ENCODE measurements at regions of chr11 and their contacts with region 1.

Region 1: GRCh38 chr11:124769801-124770639 is 7.9 kb upstream of the ESAM start:
- DNase-seq: no peak
- H3K4me3 ChIP-seq: no peak overlapping the region
- H3K27ac ChIP-seq: no peak overlapping the region
- H3K4me1 ChIP-seq: no peaks in the 10 kb centered on the region
- H3K27me3 ChIP-seq: no peaks in the 10 kb centered on the region
- CTCF ChIP-seq: no peak
- POLR2A ChIP-seq: no peak

Region 2: GRCh38 chr11:126231725-126232459 is 1461.9 kb after region 1 on chr11:
- intact Hi-C with region 1: loop called (anchors 5 kb)
- DNase-seq: no peak
- H3K4me3 ChIP-seq: no peak overlapping the region
- H3K27ac ChIP-seq: no peak overlapping the region
- H3K4me1 ChIP-seq: no peaks in the 10 kb centered on the region
- H3K27me3 ChIP-seq: no peaks in the 10 kb centered on the region
- CTCF ChIP-seq: no peak
- POLR2A ChIP-seq: no peak